Tibial artery (tissue), 4 donors: ENCODE measurements at regions of chr10 and their contacts with region 1.

Region 1: DNA sequence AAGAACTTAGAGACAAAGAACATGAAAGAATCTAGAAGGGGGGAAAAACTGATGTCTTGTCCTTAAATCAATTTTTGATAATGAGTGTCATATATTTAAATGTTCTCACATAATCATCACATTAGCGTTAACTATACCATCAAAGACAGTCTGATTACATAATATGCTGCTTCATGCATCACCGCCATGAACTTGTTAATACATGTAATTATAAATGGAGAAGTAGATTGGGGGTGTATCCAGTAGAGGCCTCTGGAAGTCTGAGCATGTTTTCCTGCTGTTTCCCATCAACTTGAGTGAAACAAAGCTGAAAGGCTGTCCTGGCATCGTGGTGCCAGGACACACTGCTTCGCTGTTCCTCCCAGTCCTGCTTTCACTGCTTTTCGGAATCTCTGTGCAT is 48.2 kb downstream of the PRLHR start:
- DNase-seq: no peak
- H3K4me3 ChIP-seq: no peak overlapping the region
- H3K27ac ChIP-seq: no peak overlapping the region
- H3K4me1 ChIP-seq: no peaks in the 10 kb centered on the region
- H3K27me3 ChIP-seq: peaks cover 0 to 17% of the 10 kb centered on the region in 2 donors
- CTCF ChIP-seq: no peak

Region 2: DNA sequence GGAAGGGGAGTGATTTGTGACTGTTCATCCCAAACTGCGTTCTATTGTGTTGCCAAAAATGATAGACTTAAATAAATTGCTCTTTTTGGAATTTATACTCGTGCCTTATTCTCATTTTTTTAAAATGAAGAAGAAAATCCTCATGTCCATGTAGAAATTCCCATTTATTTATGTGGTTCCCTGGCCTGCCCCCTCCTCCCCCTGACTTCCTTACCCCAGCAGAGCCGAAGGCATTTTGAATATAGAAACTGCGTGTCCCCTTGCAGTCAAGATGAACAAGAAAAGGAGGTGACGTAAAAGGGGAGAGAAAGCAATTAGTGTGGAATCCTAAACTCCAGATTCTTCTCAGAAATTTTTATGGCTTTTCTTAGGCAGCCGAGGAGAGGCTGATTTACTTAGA is 331.3 kb before region 1 on chr10:
- intact Hi-C with region 1: no loop called
- DNase-seq: no peak
- H3K4me3 ChIP-seq: no peak overlapping the region
- H3K27ac ChIP-seq: no peak overlapping the region
- H3K4me1 ChIP-seq: no peaks in the 10 kb centered on the region
- H3K27me3 ChIP-seq: no peaks in the 10 kb centered on the region
- CTCF ChIP-seq: no peak

Region 3: DNA sequence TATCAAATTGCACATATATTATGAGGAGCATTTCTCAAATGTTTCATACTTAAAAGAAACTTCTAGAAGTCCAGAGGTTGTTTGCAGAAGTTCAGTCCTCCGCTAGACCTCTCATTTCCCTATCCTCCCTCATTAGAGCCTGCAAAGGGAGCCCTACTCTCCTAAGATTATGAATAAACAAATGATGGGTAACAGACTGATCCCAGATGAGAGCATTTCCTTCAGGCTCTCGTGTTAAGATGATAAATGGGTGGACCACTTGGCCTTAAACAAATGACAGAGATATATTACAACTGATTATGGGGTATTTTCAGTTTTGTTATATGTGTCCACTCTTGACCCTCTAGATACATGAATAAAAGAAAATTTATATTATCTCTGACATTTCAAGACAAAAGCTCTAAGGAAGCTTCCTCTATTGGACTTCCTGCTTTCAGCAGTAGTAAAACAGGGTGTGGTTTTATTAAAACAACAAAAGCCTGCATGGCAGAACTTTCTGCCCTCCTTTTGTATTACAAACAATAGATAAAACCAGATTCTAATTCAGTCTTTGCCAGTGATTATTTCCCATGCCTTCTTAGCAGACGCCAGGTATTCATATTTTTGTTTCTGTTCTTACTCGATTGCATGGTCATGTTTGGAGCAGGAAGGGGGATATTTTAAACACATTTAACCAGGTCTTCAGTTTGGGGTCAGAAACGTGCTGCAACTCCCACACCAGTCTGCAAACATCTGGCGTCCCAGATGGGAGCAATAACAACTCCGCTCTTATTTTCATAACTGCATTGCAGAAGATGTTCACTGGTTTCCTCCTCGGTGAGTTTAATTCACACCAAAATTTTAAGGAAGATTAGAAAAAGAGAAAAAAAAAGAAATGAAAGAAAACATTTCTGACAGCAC is 152.7 kb before region 1 on chr10:
- intact Hi-C with region 1: no loop called
- DNase-seq: no peak
- H3K4me3 ChIP-seq: no peak overlapping the region
- H3K27ac ChIP-seq: no peak overlapping the region
- H3K4me1 ChIP-seq: no peaks in the 10 kb centered on the region
- H3K27me3 ChIP-seq: no peaks in the 10 kb centered on the region
- CTCF ChIP-seq: no peak

Region 4: DNA sequence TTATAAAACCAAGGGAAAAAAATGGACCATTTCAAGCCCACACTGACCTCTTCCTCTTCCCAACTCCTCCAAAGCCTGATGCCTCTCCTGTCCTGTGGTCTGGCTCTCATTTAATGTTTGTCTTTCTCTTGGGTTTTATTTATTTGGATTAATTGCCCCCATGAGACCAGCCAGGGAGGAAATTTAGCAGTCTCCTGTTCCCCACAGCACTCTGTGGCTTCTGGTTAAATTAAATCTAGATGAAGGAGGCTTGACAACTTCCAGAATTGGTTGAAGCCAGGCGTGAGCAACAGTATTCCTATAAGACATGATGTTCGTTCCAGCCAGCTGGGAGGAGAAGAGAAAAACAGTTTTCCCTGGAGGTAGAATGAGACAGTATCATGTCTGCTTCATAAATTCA is 63.3 kb after region 1 on chr10:
- intact Hi-C with region 1: no loop called
- DNase-seq: no peak
- H3K4me3 ChIP-seq: no peak overlapping the region
- H3K27ac ChIP-seq: no peak overlapping the region
- H3K4me1 ChIP-seq: peaks cover 0 to 3% (median 0%) of the 10 kb centered on the region in 4 donors
- H3K27me3 ChIP-seq: peaks cover 0 to 9% of the 10 kb centered on the region in 2 donors
- CTCF ChIP-seq: no peak

Region 5: GRCh38 chr10:119700321-119700954 is 1153.2 kb after region 1 on chr10:
- intact Hi-C with region 1: loop called (anchors 5 kb)
- DNase-seq: no peak
- H3K4me3 ChIP-seq: no peak overlapping the region
- H3K27ac ChIP-seq: no peak overlapping the region
- H3K4me1 ChIP-seq: peaks cover 0 to 11% (median 0%) of the 10 kb centered on the region in 4 donors
- H3K27me3 ChIP-seq: no peaks in the 10 kb centered on the region
- CTCF ChIP-seq: no peak